ENCODE measurements at regions of chr12 and their contacts with region 1.

Region 1: GRCh38 chr12:109597795-109598427 is 24.3 kb downstream of the MVK start:
- DNase-seq: peak; percentile 75
- ATAC-seq: peak; percentile 100
- H3K4me3 ChIP-seq: no peak overlapping the region
- H3K27ac ChIP-seq: no peak overlapping the region
- H3K4me1 ChIP-seq: peaks cover 2% of the 10 kb centered on the region; the same call in 1 of the 2 replicates
- H3K27me3 ChIP-seq: peaks cover 5% of the 10 kb centered on the region; the same call in 1 of the 2 replicates
- CTCF ChIP-seq: peak; percentile 97
- POLR2A ChIP-seq: no peak
- RAD21 ChIP-seq: peak; percentile 86

Region 2: GRCh38 chr12:109182041-109182839 is 415.7 kb before region 1 on chr12:
- CTCF ChIA-PET with region 1: no interaction called
- POLR2A ChIA-PET with region 1: no interaction called
- dilution Hi-C with region 1: no loop called
- in situ Hi-C with region 1: no loop called
- intact Hi-C with region 1: no loop called
- DNase-seq: no peak
- ATAC-seq: no peak
- H3K4me3 ChIP-seq: no peak overlapping the region
- H3K27ac ChIP-seq: no peak overlapping the region
- H3K4me1 ChIP-seq: no peaks in the 10 kb centered on the region
- H3K27me3 ChIP-seq: no peaks in the 10 kb centered on the region
- CTCF ChIP-seq: no peak
- POLR2A ChIP-seq: no peak
- RAD21 ChIP-seq: no peak

Region 3: GRCh38 chr12:109518820-109519665 is 78.9 kb before region 1 on chr12:
- CTCF ChIA-PET with region 1: interaction called, 7 read pairs
- POLR2A ChIA-PET with region 1: no interaction called
- dilution Hi-C with region 1: no loop called
- in situ Hi-C with region 1: no loop called
- intact Hi-C with region 1: loop called (anchors 1 kb)
- DNase-seq: peak; percentile 92
- ATAC-seq: peak; percentile 91
- H3K4me3 ChIP-seq: no peak overlapping the region
- H3K27ac ChIP-seq: peak overlapping the region; percentile 67
- H3K4me1 ChIP-seq: peaks cover 7% of the 10 kb centered on the region
- H3K27me3 ChIP-seq: no peaks in the 10 kb centered on the region
- CTCF ChIP-seq: peak; percentile 84
- POLR2A ChIP-seq: no peak
- RAD21 ChIP-seq: peak; percentile 82

Region 4: DNA sequence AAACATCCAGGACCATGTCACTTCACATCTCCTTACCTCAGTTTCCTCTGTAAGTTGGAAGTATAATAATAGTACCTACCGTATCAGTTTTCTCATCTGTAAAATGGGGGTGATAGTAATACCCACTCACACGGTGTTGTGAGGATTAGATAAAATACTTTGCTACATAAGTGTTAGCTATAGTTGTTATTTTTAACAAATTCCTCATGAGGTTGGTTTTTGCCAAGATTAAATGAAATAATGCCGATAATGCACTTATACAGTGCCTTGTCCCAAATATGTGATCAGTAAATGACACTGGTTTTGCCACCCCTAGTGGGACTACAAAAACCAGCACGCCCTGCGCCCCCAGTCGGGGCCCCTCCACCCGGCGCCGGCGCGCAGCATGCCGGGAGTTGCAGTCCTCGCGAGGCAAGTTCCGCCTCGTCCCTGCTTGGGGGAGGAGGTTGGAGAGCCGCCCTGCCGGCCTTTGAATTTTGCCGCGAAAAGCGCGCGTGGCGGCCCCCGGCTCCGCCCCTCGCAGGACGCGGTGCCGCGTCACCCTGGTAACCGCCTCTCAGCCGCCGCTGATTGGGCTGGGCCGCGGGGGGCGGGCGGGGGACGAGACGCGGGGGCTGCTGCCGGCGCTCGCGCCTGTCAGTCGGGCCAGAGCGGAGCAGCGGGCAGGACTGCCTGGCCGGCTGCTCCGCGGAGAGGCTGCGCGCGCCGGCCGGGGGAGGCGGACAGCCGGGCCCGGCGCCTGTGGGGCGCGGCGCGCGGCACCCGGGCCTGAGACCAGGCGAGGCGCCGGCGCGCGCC is 115.5 kb after region 1 on chr12 and contains the start of gene FAM222A:
- CTCF ChIA-PET with region 1: no interaction called
- POLR2A ChIA-PET with region 1: no interaction called
- dilution Hi-C with region 1: no loop called
- in situ Hi-C with region 1: no loop called
- intact Hi-C with region 1: loop called (anchors 5 kb)
- DNase-seq: peak; percentile 93
- ATAC-seq: peak; percentile 96
- H3K4me3 ChIP-seq: peak within 1 kb of the TSS; percentile 51
- H3K27ac ChIP-seq: no peak within 1 kb of the TSS
- H3K4me1 ChIP-seq: peaks cover 2% of the 10 kb centered on the region; the same call in 1 of the 2 replicates
- H3K27me3 ChIP-seq: peaks cover 57% of the 10 kb centered on the region
- CTCF ChIP-seq: no peak
- POLR2A ChIP-seq: peak; percentile 91
- RAD21 ChIP-seq: no peak
- total RNA-seq, gene FAM222A: under 0.01 TPM in 2 replicates